ENCODE measurements at regions of chr3 and their contacts with region 1.

Region 1: DNA sequence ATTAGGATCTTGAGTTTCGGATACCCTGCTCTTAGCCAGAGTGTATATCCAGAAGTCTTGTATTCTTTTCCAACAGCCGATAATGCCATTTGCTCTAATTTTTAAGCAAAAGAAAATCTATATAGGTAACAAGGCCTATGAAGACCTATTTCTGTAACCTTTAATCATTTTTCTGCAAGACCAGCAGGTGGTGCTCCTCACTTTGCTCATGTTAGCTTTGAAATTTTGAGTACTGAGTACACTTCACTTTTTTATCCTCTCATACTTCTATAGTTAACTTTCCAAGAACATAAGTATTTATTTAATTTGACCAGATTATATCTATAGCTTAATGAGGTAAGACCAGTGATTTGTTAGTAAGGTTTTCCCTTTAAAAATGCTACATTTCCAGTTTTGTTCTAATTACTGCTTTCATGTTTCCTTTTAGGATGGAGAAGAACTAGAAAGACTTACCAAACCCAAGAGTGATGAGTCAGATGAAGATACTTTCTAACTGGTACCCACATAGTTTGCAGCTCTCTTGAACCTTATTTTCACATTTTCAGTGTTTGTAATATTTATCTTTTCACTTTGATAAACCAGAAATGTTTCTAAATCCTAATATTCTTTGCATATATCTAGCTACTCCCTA is 20.5 kb downstream of the SLC35A5 start:
- DNase-seq: no peak
- ATAC-seq: peak; percentile 71
- H3K4me3 ChIP-seq: no peak overlapping the region
- H3K27ac ChIP-seq: no peak overlapping the region
- H3K4me1 ChIP-seq: no peaks in the 10 kb centered on the region
- H3K27me3 ChIP-seq: no peaks in the 10 kb centered on the region
- CTCF ChIP-seq: peak; percentile 55 to 63 (median 60)
- EP300 ChIP-seq: no peak
- POLR2A ChIP-seq: no peak
- RAD21 ChIP-seq: peak; percentile 72

Region 2: GRCh38 chr3:111846717-111847116 is 735.6 kb before region 1 on chr3:
- CTCF ChIA-PET with region 1: no interaction called
- POLR2A ChIA-PET with region 1: no interaction called
- RAD21 ChIA-PET with region 1: no interaction called
- SMC1A ChIA-PET with region 1: no interaction called
- in situ Hi-C with region 1: no loop called
- intact Hi-C with region 1: no loop called
- DNase-seq: no peak
- ATAC-seq: no peak
- H3K4me3 ChIP-seq: no peak overlapping the region
- H3K27ac ChIP-seq: no peak overlapping the region
- H3K4me1 ChIP-seq: no peaks in the 10 kb centered on the region
- H3K27me3 ChIP-seq: no peaks in the 10 kb centered on the region
- CTCF ChIP-seq: no peak
- EP300 ChIP-seq: no peak
- POLR2A ChIP-seq: no peak
- RAD21 ChIP-seq: no peak

Region 3: GRCh38 chr3:112482675-112483074 is 99.7 kb before region 1 on chr3:
- CTCF ChIA-PET with region 1: no interaction called
- POLR2A ChIA-PET with region 1: no interaction called
- RAD21 ChIA-PET with region 1: no interaction called
- SMC1A ChIA-PET with region 1: no interaction called
- in situ Hi-C with region 1: no loop called
- intact Hi-C with region 1: no loop called
- DNase-seq: no peak
- ATAC-seq: peak; percentile 45
- H3K4me3 ChIP-seq: no peak overlapping the region
- H3K27ac ChIP-seq: peak overlapping the region; percentile 58; the same call in 1 of the 2 replicates
- H3K4me1 ChIP-seq: peaks cover 30% of the 10 kb centered on the region
- H3K27me3 ChIP-seq: no peaks in the 10 kb centered on the region
- CTCF ChIP-seq: no peak
- EP300 ChIP-seq: no peak
- POLR2A ChIP-seq: no peak
- RAD21 ChIP-seq: no peak

Region 4: DNA sequence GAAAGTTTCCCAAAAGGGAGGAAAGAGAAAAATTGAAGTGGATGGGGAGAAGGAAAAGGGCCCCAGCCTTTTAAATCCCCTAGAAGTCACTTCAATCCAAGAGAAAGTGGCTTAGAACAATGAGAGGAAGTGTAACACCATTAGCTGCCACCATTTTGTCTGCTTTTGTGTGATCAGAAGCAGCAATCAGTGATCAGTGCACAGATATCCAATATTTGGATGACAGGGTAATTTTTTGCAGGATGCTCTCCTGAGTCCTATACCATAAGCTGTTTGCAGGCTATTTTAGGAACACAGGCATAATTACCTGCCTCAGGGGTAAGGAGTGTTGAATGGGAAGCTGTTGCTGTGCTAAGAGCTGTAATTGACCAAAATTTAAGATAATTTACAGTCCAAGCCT is 10.9 kb after region 1 on chr3:
- CTCF ChIA-PET with region 1: interaction called, 23 read pairs
- POLR2A ChIA-PET with region 1: no interaction called
- RAD21 ChIA-PET with region 1: no interaction called
- SMC1A ChIA-PET with region 1: interaction called, 3 read pairs
- in situ Hi-C with region 1: no loop called
- intact Hi-C with region 1: no loop called
- DNase-seq: no peak
- ATAC-seq: no peak
- H3K4me3 ChIP-seq: no peak overlapping the region
- H3K27ac ChIP-seq: no peak overlapping the region
- H3K4me1 ChIP-seq: no peaks in the 10 kb centered on the region
- H3K27me3 ChIP-seq: no peaks in the 10 kb centered on the region
- CTCF ChIP-seq: no peak
- EP300 ChIP-seq: no peak
- POLR2A ChIP-seq: no peak
- RAD21 ChIP-seq: no peak

Region 5: DNA sequence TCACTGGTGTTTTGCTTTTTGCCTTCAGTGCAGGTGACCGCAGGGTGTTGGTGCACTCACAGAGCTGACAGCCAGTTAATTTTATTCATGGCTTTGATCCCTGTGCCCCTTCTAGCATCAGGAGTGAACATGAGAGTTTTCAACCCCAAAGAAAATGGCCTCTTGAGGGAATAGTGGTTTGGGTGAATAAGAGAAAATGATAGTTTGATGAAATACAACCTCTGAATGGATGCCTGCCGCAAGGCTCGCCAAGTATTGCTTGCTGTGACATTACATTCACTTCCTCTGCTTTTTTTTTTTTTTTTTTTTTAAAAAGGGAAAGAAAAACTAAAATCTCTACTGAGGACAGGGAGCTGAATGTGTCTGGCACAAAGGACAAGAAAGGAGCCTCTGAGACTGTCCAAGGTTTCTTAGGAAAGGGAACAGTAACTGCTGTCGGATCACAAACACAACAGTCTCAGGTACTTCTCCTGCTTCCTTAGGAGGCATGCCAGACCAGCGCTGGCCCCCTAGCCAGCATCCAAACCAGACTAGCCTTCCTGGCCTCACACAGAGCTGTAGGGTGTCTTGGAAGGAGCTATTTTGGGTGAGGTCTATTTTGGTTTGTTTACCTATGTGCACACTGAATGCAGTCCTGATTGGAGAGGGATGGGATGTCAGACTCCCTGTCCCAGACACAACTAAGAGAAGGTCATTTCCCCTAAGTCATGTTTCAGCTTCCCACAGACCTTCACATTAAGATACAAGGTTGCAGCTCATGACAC is 29.6 kb after region 1 on chr3:
- CTCF ChIA-PET with region 1: interaction called, 12 read pairs
- POLR2A ChIA-PET with region 1: no interaction called
- RAD21 ChIA-PET with region 1: no interaction called
- SMC1A ChIA-PET with region 1: interaction called, 4 read pairs
- in situ Hi-C with region 1: no loop called
- intact Hi-C with region 1: no loop called
- DNase-seq: no peak
- ATAC-seq: no peak
- H3K4me3 ChIP-seq: no peak overlapping the region
- H3K27ac ChIP-seq: no peak overlapping the region
- H3K4me1 ChIP-seq: no peaks in the 10 kb centered on the region
- H3K27me3 ChIP-seq: peaks cover 0 to 11% of the 10 kb centered on the region in 2 experiments; a peak in 3 of 4 replicates
- CTCF ChIP-seq: no peak
- EP300 ChIP-seq: no peak
- POLR2A ChIP-seq: no peak
- RAD21 ChIP-seq: no peak

Region 6: GRCh38 chr3:112979240-112979832 is 397.0 kb after region 1 on chr3:
- CTCF ChIA-PET with region 1: interaction called, 13 read pairs
- POLR2A ChIA-PET with region 1: no interaction called
- RAD21 ChIA-PET with region 1: interaction called, 3 read pairs
- SMC1A ChIA-PET with region 1: interaction called, 6 read pairs
- in situ Hi-C with region 1: no loop called
- intact Hi-C with region 1: loop called (anchors 5 kb)
- DNase-seq: no peak
- ATAC-seq: peak; percentile 51
- H3K4me3 ChIP-seq: no peak overlapping the region
- H3K27ac ChIP-seq: no peak overlapping the region
- H3K4me1 ChIP-seq: peaks cover 25% of the 10 kb centered on the region
- H3K27me3 ChIP-seq: no peaks in the 10 kb centered on the region
- CTCF ChIP-seq: peak; percentile 35 to 62 (median 49); a peak in 4 of 6 replicates
- EP300 ChIP-seq: no peak
- POLR2A ChIP-seq: no peak
- RAD21 ChIP-seq: peak; percentile 74

Region 7: GRCh38 chr3:113151461-113152031 is 569.2 kb after region 1 on chr3:
- CTCF ChIA-PET with region 1: no interaction called
- POLR2A ChIA-PET with region 1: no interaction called
- RAD21 ChIA-PET with region 1: no interaction called
- SMC1A ChIA-PET with region 1: no interaction called
- in situ Hi-C with region 1: no loop called
- intact Hi-C with region 1: no loop called
- DNase-seq: no peak
- ATAC-seq: no peak
- H3K4me3 ChIP-seq: no peak overlapping the region
- H3K27ac ChIP-seq: no peak overlapping the region
- H3K4me1 ChIP-seq: peaks cover 11% of the 10 kb centered on the region
- H3K27me3 ChIP-seq: no peaks in the 10 kb centered on the region
- CTCF ChIP-seq: no peak
- EP300 ChIP-seq: no peak
- POLR2A ChIP-seq: no peak
- RAD21 ChIP-seq: no peak